Sigmoid colon (tissue), 7 donors: ENCODE measurements at regions of chr4 and their contacts with region 1.

Region 1: DNA sequence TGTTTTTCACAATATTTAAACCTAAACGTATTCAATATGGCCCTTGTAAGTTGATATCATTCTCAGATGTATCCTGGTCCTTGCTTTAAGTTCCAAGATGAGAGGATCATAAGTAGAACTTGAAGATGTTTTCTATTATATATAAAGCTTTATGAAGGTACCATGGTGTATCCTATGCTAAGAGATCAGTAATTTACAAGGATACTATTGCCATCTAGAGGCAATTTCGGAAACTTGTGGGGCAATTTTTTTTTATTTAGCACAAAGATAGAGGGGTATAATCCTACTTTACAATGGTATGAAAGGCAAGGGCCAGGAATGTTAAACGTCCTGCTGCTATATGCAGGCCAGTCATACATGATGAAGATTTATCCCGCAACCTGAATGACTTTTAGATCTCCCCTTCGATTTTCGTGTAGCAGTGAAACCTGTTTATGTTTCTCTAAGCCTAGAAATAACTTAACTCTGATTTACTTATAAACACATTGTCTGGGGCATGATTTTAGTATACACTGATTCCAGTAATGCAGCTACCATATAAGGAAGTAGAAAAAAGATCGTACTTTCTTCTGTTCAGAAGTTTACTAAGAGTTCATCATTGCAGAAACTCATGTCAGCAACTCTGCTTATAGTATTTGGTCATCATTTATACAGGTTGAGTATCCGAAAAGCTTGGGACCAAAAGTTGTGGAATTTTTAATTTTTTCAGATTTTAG is 2.6 kb downstream of the SLC25A31 start:
- DNase-seq: no peak
- H3K4me3 ChIP-seq: no peak overlapping the region
- H3K27ac ChIP-seq: no peak overlapping the region
- H3K4me1 ChIP-seq: no peaks in the 10 kb centered on the region
- H3K27me3 ChIP-seq: no peaks in the 10 kb centered on the region
- CTCF ChIP-seq: peak in 3 of 4 experiments; percentile 17 to 50 (median 24)
- EP300 ChIP-seq: no peak
- POLR2A ChIP-seq: no peak

Region 2: GRCh38 chr4:127606823-127607222 is 125.9 kb before region 1 on chr4:
- intact Hi-C with region 1: loop called (anchors 2 kb)
- DNase-seq: no peak
- H3K4me3 ChIP-seq: no peak overlapping the region
- H3K27ac ChIP-seq: no peak overlapping the region
- H3K4me1 ChIP-seq: no peaks in the 10 kb centered on the region
- H3K27me3 ChIP-seq: peaks cover 0 to 6% (median 0%) of the 10 kb centered on the region in 3 donors
- CTCF ChIP-seq: no peak
- EP300 ChIP-seq: no peak
- POLR2A ChIP-seq: no peak